A673 (cell line): ENCODE measurements at regions of chr6 and their contacts with region 1.

Region 1: DNA sequence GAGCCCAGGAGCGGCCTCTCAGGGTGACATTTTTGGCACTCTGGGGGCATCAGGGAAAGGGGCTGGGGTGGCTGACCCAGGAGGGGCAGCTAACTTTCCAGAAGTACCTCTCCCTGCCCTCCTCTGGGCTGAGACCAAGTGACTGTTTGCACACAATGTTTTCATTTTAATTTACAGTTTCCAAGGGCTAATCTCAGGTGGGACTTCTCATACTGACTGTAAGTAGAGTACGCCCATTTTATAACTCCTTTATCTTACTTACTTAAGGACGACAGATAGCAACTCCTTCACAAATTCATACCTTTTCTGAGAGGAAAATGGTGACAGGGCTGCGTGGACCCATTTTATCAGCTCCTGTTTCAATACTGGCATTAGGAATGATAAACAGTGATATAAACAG is 172.9 kb upstream of the EXOC2 start:
- DNase-seq: no peak
- H3K4me3 ChIP-seq: no peak overlapping the region
- H3K27ac ChIP-seq: no peak overlapping the region
- H3K4me1 ChIP-seq: no peaks in the 10 kb centered on the region
- H3K27me3 ChIP-seq: peaks cover 30% of the 10 kb centered on the region
- CTCF ChIP-seq: no peak

Region 2: GRCh38 chr6:551405-551804 is 314.4 kb before region 1 on chr6:
- CTCF ChIA-PET with region 1: no interaction called
- POLR2A ChIA-PET with region 1: no interaction called
- intact Hi-C with region 1: no loop called
- DNase-seq: peak; percentile 46
- H3K4me3 ChIP-seq: no peak overlapping the region
- H3K27ac ChIP-seq: no peak overlapping the region
- H3K4me1 ChIP-seq: no peaks in the 10 kb centered on the region
- H3K27me3 ChIP-seq: no peaks in the 10 kb centered on the region
- CTCF ChIP-seq: 0 out of 2 replicates have a peak, but pooled peaks have one; percentile 26

Region 3: GRCh38 chr6:938271-938905 is 72.5 kb after region 1 on chr6:
- CTCF ChIA-PET with region 1: no interaction called
- POLR2A ChIA-PET with region 1: interaction called, 13 read pairs
- intact Hi-C with region 1: no loop called
- DNase-seq: no peak
- H3K4me3 ChIP-seq: no peak overlapping the region
- H3K27ac ChIP-seq: no peak overlapping the region
- H3K4me1 ChIP-seq: no peaks in the 10 kb centered on the region
- H3K27me3 ChIP-seq: peaks cover 15% of the 10 kb centered on the region
- CTCF ChIP-seq: no peak

Region 4: GRCh38 chr6:1162367-1163275 is 296.8 kb after region 1 on chr6:
- CTCF ChIA-PET with region 1: no interaction called
- POLR2A ChIA-PET with region 1: no interaction called
- intact Hi-C with region 1: no loop called
- DNase-seq: no peak
- H3K4me3 ChIP-seq: no peak overlapping the region
- H3K27ac ChIP-seq: no peak overlapping the region
- H3K4me1 ChIP-seq: no peaks in the 10 kb centered on the region
- H3K27me3 ChIP-seq: peaks cover 2% of the 10 kb centered on the region
- CTCF ChIP-seq: no peak